Activated naive CD4-positive, alpha-beta T cell treated with anti-CD3 and anti-CD28 coated beads for 36 hours (primary cell): ENCODE measurements at regions of chr2 and their contacts with region 1.

Region 1: GRCh38 chr2:47373747-47374146 is 29.2 kb upstream of the MSH2 start:
- DNase-seq: no peak
- H3K4me3 Mint-ChIP-seq: no peak overlapping the region
- H3K27ac Mint-ChIP-seq: no peak overlapping the region
- H3K4me1 Mint-ChIP-seq: no peaks in the 10 kb centered on the region
- H3K27me3 Mint-ChIP-seq: peaks cover 9% of the 10 kb centered on the region

Region 2: DNA sequence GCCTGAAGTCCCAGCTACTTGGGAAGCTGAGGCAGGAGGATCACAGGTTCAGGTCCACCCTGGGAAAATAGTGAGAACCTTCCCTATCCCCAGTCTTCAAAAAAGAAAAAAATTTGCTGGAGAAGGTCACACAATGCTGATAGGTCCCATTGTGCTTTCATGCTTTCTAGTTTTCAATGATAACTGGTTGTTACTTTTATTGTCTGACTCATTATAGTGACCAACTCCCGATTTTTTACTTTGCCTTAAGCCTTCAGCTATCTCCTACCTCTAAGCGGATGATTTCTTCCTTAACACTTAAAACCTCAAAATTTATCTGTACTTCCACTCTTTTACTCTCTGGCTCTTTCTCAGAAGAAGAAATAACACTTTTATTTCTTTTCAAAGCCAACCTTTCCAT is 46.5 kb after region 1 on chr2:
- CTCF ChIA-PET with region 1: no interaction called
- intact Hi-C with region 1: loop called (anchors 2 kb)
- DNase-seq: no peak
- H3K4me3 Mint-ChIP-seq: no peak overlapping the region
- H3K27ac Mint-ChIP-seq: no peak overlapping the region
- H3K4me1 Mint-ChIP-seq: no peaks in the 10 kb centered on the region
- H3K27me3 Mint-ChIP-seq: no peaks in the 10 kb centered on the region